GM12878 (cell line): ENCODE measurements at regions of chr7 and their contacts with region 1.

Region 1: GRCh38 chr7:31443457-31443856 is 70.4 kb upstream of the ITPRID1 start:
- DNase-seq: peak; percentile 21
- ATAC-seq: peak; percentile 89
- H3K4me3 ChIP-seq: no peak overlapping the region
- H3K27ac ChIP-seq: no peak overlapping the region
- H3K4me1 ChIP-seq: no peaks in the 10 kb centered on the region
- H3K27me3 ChIP-seq: 0 out of 4 replicates have a peak, but pooled peaks cover 0 to 3% of the 10 kb centered on the region in 2 experiments
- CTCF ChIP-seq: peak; percentile 62 to 84 (median 77)
- EP300 ChIP-seq: no peak
- POLR2A ChIP-seq: no peak
- RAD21 ChIP-seq: peak; percentile 77

Region 2: DNA sequence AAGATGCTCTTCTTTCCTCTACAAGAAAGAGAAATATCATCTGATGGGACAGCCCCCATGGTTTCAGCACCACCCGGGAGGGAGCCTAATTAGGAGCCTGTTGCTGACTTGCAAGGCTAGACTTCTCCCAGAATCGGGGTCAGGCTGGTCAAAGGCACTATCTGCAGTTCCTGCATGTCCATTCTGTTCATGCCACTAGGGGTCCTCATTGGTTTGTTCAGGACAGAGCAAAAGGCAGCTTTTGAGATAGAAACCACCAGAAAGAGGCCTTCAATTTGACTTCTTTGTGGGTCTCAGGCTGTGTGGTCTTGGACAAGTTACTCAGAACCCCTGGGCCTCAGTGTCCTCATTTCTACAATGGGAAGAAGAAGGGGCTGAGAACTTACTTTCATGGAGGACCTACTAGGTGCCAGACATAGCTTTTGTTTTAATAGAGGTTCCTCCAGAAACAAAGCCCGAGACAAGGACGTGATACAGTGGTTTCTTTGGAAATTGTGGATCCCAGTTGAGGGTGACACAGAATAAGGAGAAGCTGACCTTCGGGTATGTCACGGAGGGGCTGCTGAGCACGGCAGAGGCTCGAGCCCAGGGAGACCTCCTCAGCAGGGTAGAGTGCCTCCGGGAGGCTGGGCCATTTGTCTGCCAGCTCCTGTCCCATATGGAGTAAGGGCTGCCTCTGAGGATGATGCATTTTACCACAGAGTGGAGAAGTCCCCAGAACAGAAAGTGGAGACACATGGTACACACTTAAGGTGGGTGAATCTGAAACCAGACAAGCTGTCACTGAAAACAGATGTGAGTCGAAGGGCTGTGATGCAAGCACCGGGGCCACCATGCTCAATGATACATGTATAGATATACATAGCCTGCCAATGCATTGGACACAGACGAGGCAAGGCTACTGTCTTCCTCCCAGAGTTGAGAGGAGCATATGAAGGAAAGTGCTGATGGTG is 69.8 kb before region 1 on chr7:
- CTCF ChIA-PET with region 1: interaction called, 16 read pairs
- POLR2A ChIA-PET with region 1: no interaction called
- RAD21 ChIA-PET with region 1: interaction called, 4 read pairs
- SMC1A ChIA-PET with region 1: interaction called, 4 read pairs
- in situ Hi-C with region 1: no loop called
- intact Hi-C with region 1: loop called (anchors 5 kb)
- DNase-seq: no peak
- ATAC-seq: peak; percentile 95
- H3K4me3 ChIP-seq: no peak overlapping the region
- H3K27ac ChIP-seq: no peak overlapping the region
- H3K4me1 ChIP-seq: no peaks in the 10 kb centered on the region
- H3K27me3 ChIP-seq: peaks cover 0 to 6% of the 10 kb centered on the region in 2 experiments; a peak in 1 of 4 replicates
- CTCF ChIP-seq: peak; percentile 60 to 77 (median 71)
- EP300 ChIP-seq: no peak
- POLR2A ChIP-seq: no peak
- RAD21 ChIP-seq: peak; percentile 63

Region 3: GRCh38 chr7:31432836-31433340 is 10.6 kb before region 1 on chr7:
- CTCF ChIA-PET with region 1: interaction called, 13 read pairs
- POLR2A ChIA-PET with region 1: no interaction called
- RAD21 ChIA-PET with region 1: no interaction called
- SMC1A ChIA-PET with region 1: interaction called, 5 read pairs
- in situ Hi-C with region 1: no loop called
- intact Hi-C with region 1: no loop called
- DNase-seq: no peak
- ATAC-seq: no peak
- H3K4me3 ChIP-seq: no peak overlapping the region
- H3K27ac ChIP-seq: no peak overlapping the region
- H3K4me1 ChIP-seq: no peaks in the 10 kb centered on the region
- H3K27me3 ChIP-seq: no peaks in the 10 kb centered on the region; a peak in 1 of 4 replicates
- CTCF ChIP-seq: no peak
- EP300 ChIP-seq: no peak
- POLR2A ChIP-seq: no peak
- RAD21 ChIP-seq: no peak

Region 4: GRCh38 chr7:31488562-31489203 is 45.2 kb after region 1 on chr7:
- CTCF ChIA-PET with region 1: interaction called, 61 read pairs
- POLR2A ChIA-PET with region 1: no interaction called
- RAD21 ChIA-PET with region 1: interaction called, 17 read pairs
- SMC1A ChIA-PET with region 1: interaction called, 19 read pairs
- in situ Hi-C with region 1: no loop called
- intact Hi-C with region 1: loop called (anchors 1 kb)
- DNase-seq: peak; percentile 34
- ATAC-seq: peak; percentile 100
- H3K4me3 ChIP-seq: no peak overlapping the region
- H3K27ac ChIP-seq: no peak overlapping the region
- H3K4me1 ChIP-seq: 0 out of 2 replicates have a peak, but pooled peaks cover 3% of the 10 kb centered on the region
- H3K27me3 ChIP-seq: no peaks in the 10 kb centered on the region
- CTCF ChIP-seq: peak; percentile 71 to 90 (median 89)
- EP300 ChIP-seq: no peak
- POLR2A ChIP-seq: no peak
- RAD21 ChIP-seq: peak; percentile 69

Region 5: DNA sequence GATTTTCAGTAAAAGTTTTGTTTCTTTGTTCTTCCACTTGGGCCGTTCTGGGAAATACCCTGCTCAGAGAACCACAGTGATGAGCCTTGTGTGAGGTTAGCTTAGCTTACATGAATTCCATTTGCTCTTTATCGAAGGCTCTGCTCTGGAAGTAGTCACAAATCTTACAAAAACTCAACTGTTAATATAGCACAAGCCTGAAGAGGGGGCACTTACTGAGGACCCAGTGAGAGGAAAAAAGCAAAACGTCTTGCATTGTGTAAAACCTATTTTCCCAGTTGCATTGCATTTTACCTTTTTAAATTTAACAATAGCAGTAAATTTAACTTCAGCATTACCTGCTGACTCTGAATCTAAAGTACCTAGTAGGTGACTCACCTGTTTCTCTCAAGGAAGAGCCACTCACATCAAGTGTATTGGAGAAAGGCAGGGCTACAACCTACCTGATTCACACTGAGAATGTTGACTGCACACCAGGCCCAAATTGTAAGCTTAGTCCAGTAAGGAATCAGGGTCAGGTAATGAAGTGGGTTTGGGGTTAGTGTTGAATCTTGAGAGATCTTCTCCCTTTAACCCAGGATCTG is 285.8 kb after region 1 on chr7:
- CTCF ChIA-PET with region 1: interaction called, 32 read pairs
- POLR2A ChIA-PET with region 1: no interaction called
- RAD21 ChIA-PET with region 1: interaction called, 16 read pairs
- SMC1A ChIA-PET with region 1: interaction called, 18 read pairs
- in situ Hi-C with region 1: no loop called
- intact Hi-C with region 1: no loop called
- DNase-seq: no peak
- ATAC-seq: no peak
- H3K4me3 ChIP-seq: no peak overlapping the region
- H3K27ac ChIP-seq: no peak overlapping the region
- H3K4me1 ChIP-seq: no peaks in the 10 kb centered on the region
- H3K27me3 ChIP-seq: no peaks in the 10 kb centered on the region; a peak in 2 of 4 replicates
- CTCF ChIP-seq: no peak
- EP300 ChIP-seq: no peak
- POLR2A ChIP-seq: no peak
- RAD21 ChIP-seq: no peak

Region 6: GRCh38 chr7:32043714-32044113 is 600.3 kb after region 1 on chr7:
- CTCF ChIA-PET with region 1: no interaction called
- POLR2A ChIA-PET with region 1: no interaction called
- RAD21 ChIA-PET with region 1: no interaction called
- SMC1A ChIA-PET with region 1: no interaction called
- in situ Hi-C with region 1: no loop called
- intact Hi-C with region 1: no loop called
- DNase-seq: no peak
- ATAC-seq: peak; percentile 87
- H3K4me3 ChIP-seq: no peak overlapping the region
- H3K27ac ChIP-seq: no peak overlapping the region
- H3K4me1 ChIP-seq: no peaks in the 10 kb centered on the region
- H3K27me3 ChIP-seq: no peaks in the 10 kb centered on the region
- CTCF ChIP-seq: no peak
- EP300 ChIP-seq: peak in 1 of 2 experiments; percentile 35; a peak in 1 of 4 replicates
- POLR2A ChIP-seq: no peak
- RAD21 ChIP-seq: no peak

Region 7: GRCh38 chr7:32204361-32205018 is 761.0 kb after region 1 on chr7:
- CTCF ChIA-PET with region 1: interaction called, 3 read pairs
- POLR2A ChIA-PET with region 1: no interaction called
- RAD21 ChIA-PET with region 1: interaction called, 3 read pairs
- SMC1A ChIA-PET with region 1: interaction called, 3 read pairs
- in situ Hi-C with region 1: no loop called
- intact Hi-C with region 1: loop called (anchors 5 kb)
- DNase-seq: peak; percentile 5
- ATAC-seq: peak; percentile 97
- H3K4me3 ChIP-seq: no peak overlapping the region
- H3K27ac ChIP-seq: no peak overlapping the region
- H3K4me1 ChIP-seq: no peaks in the 10 kb centered on the region
- H3K27me3 ChIP-seq: no peaks in the 10 kb centered on the region; a peak in 1 of 4 replicates
- CTCF ChIP-seq: peak; percentile 56 to 61 (median 56); a peak in 4 of 6 replicates
- EP300 ChIP-seq: no peak
- POLR2A ChIP-seq: no peak
- RAD21 ChIP-seq: peak; percentile 81